Activated T-helper 2 cell treated with anti-CD3 and anti-CD28 coated beads, Interferon-gamma antibody, Interleukin-2, Interleukin-4, amounts not matched to agents 10 μg/mL and 5 μg/mL and 100 μg/mL, durations not matched to agents 14 hours and 24 hours and 36 hours (primary cell): ENCODE measurements at regions of chr9 and their contacts with region 1.

Region 1: GRCh38 chr9:36487482-36488388 is 85.0 kb upstream of the MELK start:
- DNase-seq: peak; percentile 89
- H3K4me3 Mint-ChIP-seq: peak overlapping the region; percentile 90
- H3K27ac Mint-ChIP-seq: peak overlapping the region; percentile 99
- H3K4me1 Mint-ChIP-seq: peaks cover 45% of the 10 kb centered on the region
- H3K27me3 Mint-ChIP-seq: no peaks in the 10 kb centered on the region

Region 2: DNA sequence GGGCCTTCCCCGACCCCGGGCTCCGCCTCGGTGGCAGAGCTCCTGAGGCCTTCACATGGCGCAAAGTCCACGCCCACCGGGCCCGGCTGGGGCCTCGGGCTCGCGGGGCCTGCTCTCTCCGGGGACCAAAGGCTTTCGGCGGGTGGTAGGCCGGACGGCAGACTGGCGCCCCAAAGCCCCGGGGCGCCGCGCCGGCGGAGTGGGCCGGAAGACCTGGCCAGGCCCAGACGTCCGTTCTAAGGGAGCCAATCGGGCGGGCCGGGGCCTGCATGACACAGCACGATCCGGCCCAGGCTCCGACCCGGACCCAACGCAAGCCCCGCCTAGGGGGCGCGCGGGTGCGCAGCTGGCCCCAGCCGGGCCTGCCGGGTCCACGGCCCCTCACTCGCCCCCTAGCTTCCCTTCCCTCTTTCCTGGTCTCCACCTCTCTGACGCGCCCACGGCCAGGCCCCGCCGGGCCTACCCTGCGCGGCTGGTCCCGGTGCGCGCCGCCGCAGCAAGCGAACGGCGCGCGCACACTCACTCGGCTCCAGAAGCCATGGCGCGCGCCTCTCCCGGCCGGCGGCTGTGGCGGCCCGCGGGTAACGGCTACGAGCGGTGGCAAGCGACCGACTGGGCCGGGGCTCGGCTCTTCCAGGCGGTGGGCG is 1415.8 kb before region 1 on chr9:
- intact Hi-C with region 1: loop called (anchors 10 kb)
- DNase-seq: peak; percentile 72
- H3K4me3 Mint-ChIP-seq: peak overlapping the region; percentile 91
- H3K27ac Mint-ChIP-seq: peak overlapping the region; percentile 88
- H3K4me1 Mint-ChIP-seq: peaks cover 43% of the 10 kb centered on the region
- H3K27me3 Mint-ChIP-seq: no peaks in the 10 kb centered on the region

Region 3: DNA sequence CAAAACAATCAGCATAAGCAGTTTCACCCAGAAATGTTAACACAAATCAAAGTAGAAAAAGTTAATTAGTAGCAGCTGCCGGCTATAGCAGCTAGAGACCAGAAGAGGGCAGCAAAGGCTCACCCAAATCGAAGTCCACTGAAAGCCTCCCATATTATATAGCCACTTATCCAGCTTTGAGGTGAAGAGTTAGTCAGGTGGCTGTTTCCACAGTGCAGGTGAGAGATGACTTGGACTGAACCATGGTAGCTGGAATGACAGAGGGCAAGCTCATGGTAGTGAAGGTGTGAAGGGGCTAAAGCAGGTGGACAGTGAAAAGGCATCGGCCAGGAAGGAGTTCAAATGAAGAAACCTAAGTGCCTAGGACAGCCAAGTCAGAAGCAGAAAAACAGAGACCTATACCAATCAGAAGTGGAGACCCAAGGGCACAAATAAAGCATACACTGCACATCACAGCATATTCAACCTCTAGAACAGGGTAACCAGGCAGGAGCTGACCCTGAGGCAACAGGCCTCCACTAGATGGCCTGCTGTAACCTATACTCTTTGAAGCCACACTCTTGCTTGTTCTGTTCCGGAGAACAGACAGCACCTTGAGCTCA is 80.5 kb before region 1 on chr9:
- intact Hi-C with region 1: loop called (anchors 2 kb)
- DNase-seq: peak; percentile 37
- H3K4me3 Mint-ChIP-seq: no peak overlapping the region
- H3K27ac Mint-ChIP-seq: peak overlapping the region; percentile 27
- H3K4me1 Mint-ChIP-seq: peaks cover 4% of the 10 kb centered on the region
- H3K27me3 Mint-ChIP-seq: no peaks in the 10 kb centered on the region

Region 4: DNA sequence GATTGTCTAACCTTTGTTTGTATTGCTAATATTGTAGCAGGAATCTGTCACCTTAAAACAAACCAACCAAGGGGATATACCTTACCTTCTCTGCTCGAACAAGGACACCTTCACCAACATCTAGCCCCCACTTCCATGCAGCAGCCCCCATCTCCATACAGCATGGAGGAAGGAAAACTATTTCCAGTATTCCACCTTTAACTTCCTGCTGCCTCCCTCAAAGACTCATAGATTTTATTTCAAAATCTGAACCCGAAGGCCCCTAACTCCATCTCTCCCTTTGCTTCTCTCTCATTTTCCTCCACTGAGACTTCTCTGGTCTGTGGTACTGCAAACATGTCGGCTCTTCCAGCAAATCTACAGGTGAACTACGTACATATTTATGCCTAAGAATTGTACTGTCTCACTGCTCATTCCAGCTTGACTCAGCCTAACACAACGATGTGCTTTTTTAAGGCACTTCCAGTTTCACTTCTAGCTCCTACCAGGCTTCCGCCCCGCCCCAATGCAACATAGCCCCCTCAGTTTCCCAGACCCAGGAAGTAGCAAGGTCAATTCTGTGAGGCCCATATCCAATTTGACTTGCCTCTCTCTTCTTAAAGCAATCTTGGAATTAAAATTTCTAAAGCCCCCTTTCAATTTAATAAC is 17.0 kb before region 1 on chr9:
- intact Hi-C with region 1: loop called (anchors 2 kb)
- DNase-seq: peak; percentile 61
- H3K4me3 Mint-ChIP-seq: peak overlapping the region; percentile 80
- H3K27ac Mint-ChIP-seq: peak overlapping the region; percentile 89
- H3K4me1 Mint-ChIP-seq: peaks cover 32% of the 10 kb centered on the region
- H3K27me3 Mint-ChIP-seq: no peaks in the 10 kb centered on the region

Region 5: DNA sequence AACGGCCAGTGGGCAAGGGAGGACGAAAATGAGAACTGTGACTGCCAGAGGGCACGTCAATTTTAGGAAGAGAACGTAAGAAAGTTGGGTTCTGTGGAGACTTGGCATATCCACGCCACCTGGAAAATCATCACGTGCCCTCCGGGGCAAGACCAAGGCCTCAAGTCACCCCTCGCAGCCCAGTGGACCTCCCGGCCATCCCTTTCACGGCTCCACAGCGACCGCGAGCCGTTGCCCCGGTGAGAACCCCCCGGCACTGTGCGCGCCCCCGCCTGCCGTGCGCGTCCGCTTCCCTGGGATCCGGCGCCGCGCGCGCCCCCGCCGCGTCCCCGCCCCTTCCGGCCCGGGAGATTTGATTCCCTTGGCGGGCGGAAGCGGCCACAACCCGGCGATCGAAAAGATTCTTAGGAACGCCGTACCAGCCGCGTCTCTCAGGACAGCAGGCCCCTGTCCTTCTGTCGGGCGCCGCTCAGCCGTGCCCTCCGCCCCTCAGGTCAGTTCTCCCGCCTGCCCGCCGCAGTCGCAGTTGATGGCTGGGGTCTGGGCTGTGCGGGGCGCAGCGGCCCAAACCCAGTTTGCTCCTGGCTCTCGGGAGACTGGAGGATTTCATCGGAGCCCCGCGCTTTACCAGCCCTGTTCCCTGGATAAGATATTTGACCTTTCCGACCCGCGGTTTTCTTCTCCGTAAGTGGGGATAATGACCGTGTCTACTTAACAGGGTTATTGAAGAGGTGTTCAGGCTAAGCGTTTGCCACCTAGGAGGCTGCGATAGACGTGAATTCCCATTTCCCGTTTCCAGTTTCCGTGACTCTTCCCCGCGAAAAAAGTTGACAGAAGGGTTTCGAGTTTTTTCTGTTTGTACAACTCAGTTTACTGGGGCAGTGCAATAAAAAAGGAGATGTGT is 85.0 kb after region 1 on chr9 and contains the start of gene MELK:
- intact Hi-C with region 1: loop called (anchors 5 kb)
- DNase-seq: peak; percentile 82
- H3K4me3 Mint-ChIP-seq: peak within 1 kb of the TSS; percentile 97
- H3K27ac Mint-ChIP-seq: peak within 1 kb of the TSS; percentile 90
- H3K4me1 Mint-ChIP-seq: peaks cover 25% of the 10 kb centered on the region
- H3K27me3 Mint-ChIP-seq: peaks cover 5% of the 10 kb centered on the region
- total RNA-seq, gene MELK: 56.3 and 57.9 TPM in 2 replicates